ENCODE measurements at regions of chr9 and their contacts with region 1.

Region 1: DNA sequence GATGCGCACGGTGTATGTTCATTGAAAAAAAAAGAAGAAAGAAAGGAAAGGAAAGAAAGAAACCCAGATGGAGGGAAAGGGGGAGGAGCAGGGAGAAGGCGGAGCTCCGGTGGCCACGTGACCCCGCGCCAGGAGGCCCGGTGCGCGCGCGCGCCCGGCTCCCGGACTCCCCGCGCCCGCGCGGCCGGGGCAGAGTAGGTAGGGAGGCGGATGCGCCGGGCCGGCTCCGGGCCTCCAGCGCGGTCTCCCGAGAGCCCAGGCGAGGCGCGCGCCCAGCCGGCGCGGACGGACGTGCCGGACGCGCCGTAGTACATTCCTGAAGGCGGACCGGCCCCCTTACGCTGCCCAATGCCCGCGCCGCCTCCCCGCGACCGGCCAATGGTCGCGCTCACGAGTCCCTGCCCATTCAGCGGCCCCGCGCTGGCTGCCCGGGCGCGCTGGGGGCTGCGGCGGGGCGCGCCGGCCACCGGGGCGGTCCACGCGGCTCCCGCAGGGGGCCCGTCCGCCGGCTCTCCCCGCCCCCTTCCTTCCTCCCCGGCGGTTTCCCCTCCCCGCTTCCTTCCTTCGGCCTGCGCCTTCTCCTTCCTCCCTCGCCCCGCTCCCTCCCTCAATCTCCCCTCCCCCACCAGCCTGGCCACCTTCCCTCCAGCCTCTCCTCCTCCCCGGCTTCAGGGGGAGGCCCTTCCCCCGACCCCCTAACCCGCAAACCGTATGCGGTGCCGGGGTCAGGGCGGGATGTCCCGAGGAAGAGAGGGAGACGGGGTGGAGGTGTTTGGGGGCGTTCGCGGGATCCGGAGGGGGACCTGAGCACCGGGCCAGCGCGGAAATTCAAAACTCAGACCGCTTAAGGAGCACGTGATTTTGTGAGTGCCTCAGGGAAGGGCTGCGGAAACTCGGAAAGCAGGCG is 5.8 kb downstream of the PTCH1 start:
- DNase-seq: peak; percentile 91
- H3K4me3 Mint-ChIP-seq: peak overlapping the region; percentile 88
- H3K27ac Mint-ChIP-seq: peak overlapping the region; percentile 88
- H3K4me1 Mint-ChIP-seq: peaks cover 32% of the 10 kb centered on the region
- H3K27me3 Mint-ChIP-seq: peaks cover 19% of the 10 kb centered on the region

Region 2: GRCh38 chr9:94726495-94727191 is 784.3 kb before region 1 on chr9 and contains the start of gene AOPEP:
- CTCF ChIA-PET with region 1: no interaction called
- POLR2A ChIA-PET with region 1: no interaction called
- intact Hi-C with region 1: loop called (anchors 5 kb)
- DNase-seq: peak; percentile 99
- H3K4me3 Mint-ChIP-seq: peak within 1 kb of the TSS; percentile 98
- H3K27ac Mint-ChIP-seq: peak within 1 kb of the TSS; percentile 98
- H3K4me1 Mint-ChIP-seq: peaks cover 12% of the 10 kb centered on the region
- H3K27me3 Mint-ChIP-seq: peaks cover 2% of the 10 kb centered on the region
- total RNA-seq, gene AOPEP: 10.7 to 12.2 TPM

Region 3: DNA sequence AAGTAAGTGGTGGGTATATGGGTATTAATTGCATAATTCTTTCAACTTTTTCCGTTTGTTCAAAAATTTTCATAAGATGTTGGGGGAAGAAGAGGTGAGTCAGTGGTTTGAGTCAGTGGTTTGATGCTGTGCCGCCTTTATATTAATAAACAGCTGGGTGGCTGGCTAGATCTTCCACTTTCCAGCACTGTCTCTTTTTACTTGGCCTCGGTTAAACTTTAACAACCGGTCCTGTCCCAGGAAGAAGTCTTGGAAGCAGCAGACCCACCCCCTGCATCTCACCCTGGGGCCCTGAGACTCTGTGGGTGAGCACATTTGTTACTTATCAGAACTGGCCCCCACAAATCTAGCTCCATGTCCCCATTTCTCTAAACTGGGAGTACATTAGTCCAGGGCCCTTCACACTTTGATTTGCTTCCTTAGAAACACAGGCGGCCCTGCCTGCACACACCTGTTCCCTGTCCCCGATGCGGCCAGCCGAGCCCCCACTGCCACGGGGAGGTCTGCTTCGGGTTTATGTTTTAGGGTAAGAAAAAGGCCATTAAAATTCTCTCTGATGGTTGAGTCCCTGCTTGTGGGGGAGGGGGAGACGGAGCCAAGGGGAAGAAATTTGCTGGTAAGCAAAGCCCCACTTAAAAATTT is 84.9 kb before region 1 on chr9:
- CTCF ChIA-PET with region 1: no interaction called
- POLR2A ChIA-PET with region 1: no interaction called
- intact Hi-C with region 1: loop called (anchors 5 kb)
- DNase-seq: no peak
- H3K4me3 Mint-ChIP-seq: peak overlapping the region; percentile 70
- H3K27ac Mint-ChIP-seq: no peak overlapping the region
- H3K4me1 Mint-ChIP-seq: peaks cover 9% of the 10 kb centered on the region
- H3K27me3 Mint-ChIP-seq: no peaks in the 10 kb centered on the region

Region 4: DNA sequence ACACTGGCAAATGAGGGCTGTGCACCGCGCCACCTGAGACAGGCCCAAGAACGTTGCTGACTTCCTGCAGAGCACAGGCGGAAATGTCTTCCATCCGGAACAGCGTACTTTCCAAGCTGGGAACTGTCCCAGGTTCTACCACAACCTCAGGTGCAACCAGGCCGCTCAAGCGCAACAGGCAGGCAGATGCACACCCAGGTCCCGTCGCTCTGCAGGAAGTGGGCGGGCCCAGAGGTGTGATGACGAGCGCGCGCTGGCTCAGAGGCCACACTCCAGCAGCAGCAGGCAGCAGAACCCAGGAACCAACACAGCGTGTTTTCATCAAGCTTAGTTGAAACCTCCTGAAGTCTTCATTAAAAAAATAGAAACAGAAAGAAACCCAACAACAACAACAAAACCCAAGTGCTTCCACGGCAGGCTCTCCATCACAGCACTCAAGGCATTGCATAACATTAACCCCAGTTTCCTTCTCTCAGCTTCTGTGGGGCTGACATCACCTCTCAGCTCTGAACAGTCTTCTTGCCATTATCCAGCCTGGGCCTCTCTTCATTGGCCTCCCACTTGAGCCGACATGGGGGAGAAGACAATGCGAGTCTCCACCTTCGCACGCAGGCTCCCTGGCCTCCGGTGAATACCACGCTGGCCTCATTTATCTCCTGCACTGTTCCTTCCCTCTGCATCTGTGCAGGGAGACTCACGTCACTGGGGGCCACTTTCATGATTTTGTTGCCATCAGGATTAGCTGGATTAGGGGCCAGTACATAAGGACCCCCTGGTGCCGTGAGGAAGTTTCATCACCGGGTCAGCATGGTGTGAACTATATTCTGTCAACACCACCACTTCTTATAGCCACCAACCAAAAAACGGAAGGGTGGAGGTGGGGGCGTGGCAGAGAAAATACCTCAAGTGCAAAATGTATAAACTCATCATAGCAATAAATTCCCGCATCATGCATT is 16.3 kb before region 1 on chr9:
- CTCF ChIA-PET with region 1: no interaction called
- POLR2A ChIA-PET with region 1: interaction called, 3 read pairs
- intact Hi-C with region 1: loop called (anchors 1 kb)
- DNase-seq: peak; percentile 91
- H3K4me3 Mint-ChIP-seq: peak overlapping the region; percentile 71
- H3K27ac Mint-ChIP-seq: peak overlapping the region; percentile 89
- H3K4me1 Mint-ChIP-seq: peaks cover 49% of the 10 kb centered on the region
- H3K27me3 Mint-ChIP-seq: peaks cover 4% of the 10 kb centered on the region

Region 5: DNA sequence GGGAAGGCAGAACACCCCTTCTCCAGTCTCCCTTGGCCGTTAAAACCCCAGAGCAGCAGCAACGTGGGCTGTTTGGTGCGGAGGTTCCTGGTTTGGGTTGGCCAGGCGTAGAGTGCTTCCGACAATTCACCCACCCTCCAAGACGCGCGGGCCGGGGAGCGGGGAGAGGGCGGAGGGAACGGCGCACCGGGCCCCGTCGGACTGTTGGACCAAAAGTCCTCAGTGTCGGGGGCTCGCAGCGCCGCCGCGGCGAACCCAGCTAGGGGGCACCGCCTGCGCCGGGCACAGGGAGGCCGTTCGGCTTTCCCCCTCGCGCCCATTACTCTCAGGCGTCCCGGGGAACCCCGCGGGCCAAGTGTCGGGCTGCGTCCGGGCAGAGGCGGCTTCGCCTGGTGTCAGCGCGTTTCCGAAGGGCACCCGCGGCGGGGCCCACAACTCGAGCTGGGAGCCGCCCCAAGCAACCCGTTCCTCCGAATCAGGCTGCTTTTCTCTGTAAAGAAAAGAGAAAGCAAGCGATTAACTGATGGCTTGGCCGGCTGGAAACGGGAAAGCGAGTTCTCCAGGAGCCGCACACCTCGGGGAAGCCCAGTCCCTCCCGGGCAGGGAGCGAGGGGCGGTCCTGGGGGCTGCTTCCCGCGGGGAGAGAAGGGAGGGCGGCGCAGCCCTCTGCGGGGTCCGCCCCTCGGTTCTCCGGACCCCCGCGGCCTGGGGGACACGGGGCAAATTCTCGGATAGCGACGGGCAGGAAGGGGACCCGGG is 510.0 kb after region 1 on chr9:
- CTCF ChIA-PET with region 1: no interaction called
- POLR2A ChIA-PET with region 1: no interaction called
- intact Hi-C with region 1: loop called (anchors 5 kb)
- DNase-seq: peak; percentile 65
- H3K4me3 Mint-ChIP-seq: peak overlapping the region; percentile 73
- H3K27ac Mint-ChIP-seq: peak overlapping the region; percentile 61
- H3K4me1 Mint-ChIP-seq: peaks cover 52% of the 10 kb centered on the region
- H3K27me3 Mint-ChIP-seq: peaks cover 12% of the 10 kb centered on the region